ENCODE measurements at regions of chr3 and their contacts with region 1.

Region 1: GRCh38 chr3:119891944-119892721 is 110.2 kb downstream of the NR1I2 start:
- DNase-seq: peak; percentile 59
- H3K4me3 Mint-ChIP-seq: no peak overlapping the region
- H3K27ac Mint-ChIP-seq: no peak overlapping the region
- H3K4me1 Mint-ChIP-seq: peaks cover 17% of the 10 kb centered on the region
- H3K27me3 Mint-ChIP-seq: no peaks in the 10 kb centered on the region

Region 2: GRCh38 chr3:119880966-119881365 is 11.2 kb before region 1 on chr3:
- CTCF ChIA-PET with region 1: interaction called, 13 read pairs
- intact Hi-C with region 1: no loop called
- DNase-seq: no peak
- H3K4me3 Mint-ChIP-seq: no peak overlapping the region
- H3K27ac Mint-ChIP-seq: no peak overlapping the region
- H3K4me1 Mint-ChIP-seq: no peaks in the 10 kb centered on the region
- H3K27me3 Mint-ChIP-seq: no peaks in the 10 kb centered on the region

Region 3: GRCh38 chr3:119937229-119937628 is 45.1 kb after region 1 on chr3:
- CTCF ChIA-PET with region 1: no interaction called
- intact Hi-C with region 1: loop called (anchors 1 kb)
- DNase-seq: peak; percentile 65
- H3K4me3 Mint-ChIP-seq: peak overlapping the region; percentile 31
- H3K27ac Mint-ChIP-seq: peak overlapping the region; percentile 5
- H3K4me1 Mint-ChIP-seq: peaks cover 42% of the 10 kb centered on the region
- H3K27me3 Mint-ChIP-seq: no peaks in the 10 kb centered on the region

Region 4: GRCh38 chr3:120147072-120147871 is 255.1 kb after region 1 on chr3:
- CTCF ChIA-PET with region 1: interaction called, 49 read pairs
- intact Hi-C with region 1: loop called (anchors 1 kb)
- DNase-seq: peak; percentile 61
- H3K4me3 Mint-ChIP-seq: no peak overlapping the region
- H3K27ac Mint-ChIP-seq: no peak overlapping the region
- H3K4me1 Mint-ChIP-seq: peaks cover 25% of the 10 kb centered on the region
- H3K27me3 Mint-ChIP-seq: no peaks in the 10 kb centered on the region

Region 5: GRCh38 chr3:120182724-120183524 is 290.8 kb after region 1 on chr3:
- CTCF ChIA-PET with region 1: interaction called, 8 read pairs
- intact Hi-C with region 1: loop called (anchors 1 kb)
- DNase-seq: peak; percentile 26
- H3K4me3 Mint-ChIP-seq: no peak overlapping the region
- H3K27ac Mint-ChIP-seq: no peak overlapping the region
- H3K4me1 Mint-ChIP-seq: no peaks in the 10 kb centered on the region
- H3K27me3 Mint-ChIP-seq: no peaks in the 10 kb centered on the region

Region 6: DNA sequence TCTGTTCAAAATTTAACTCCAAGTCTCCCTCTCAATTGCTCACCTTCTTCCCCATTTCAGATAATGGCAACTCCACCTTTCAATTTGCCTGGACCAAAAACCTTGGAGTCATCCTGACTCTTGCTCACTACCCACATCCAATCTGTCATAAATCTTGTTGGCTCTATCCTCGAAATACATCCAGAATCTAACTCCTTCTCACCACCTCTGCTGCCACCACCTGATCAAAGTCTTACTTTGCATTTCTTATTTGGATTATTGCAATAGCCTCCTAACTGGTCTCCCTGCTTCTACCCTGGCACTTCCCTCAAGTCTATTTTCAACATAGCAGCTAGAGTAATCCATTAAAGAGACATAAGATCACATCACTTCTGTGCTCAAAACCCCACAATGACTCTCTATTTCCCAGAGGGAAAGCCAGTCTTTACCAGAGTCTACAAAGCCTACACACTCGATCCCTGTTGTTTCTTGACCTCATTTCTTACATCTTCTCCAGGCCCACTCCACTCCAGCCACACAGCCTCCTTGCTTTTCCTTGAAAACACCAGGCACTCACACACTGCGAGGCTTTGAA is 306.3 kb after region 1 on chr3:
- CTCF ChIA-PET with region 1: interaction called, 8 read pairs
- intact Hi-C with region 1: loop called (anchors 1 kb)
- DNase-seq: peak; percentile 19
- H3K4me3 Mint-ChIP-seq: no peak overlapping the region
- H3K27ac Mint-ChIP-seq: no peak overlapping the region
- H3K4me1 Mint-ChIP-seq: no peaks in the 10 kb centered on the region
- H3K27me3 Mint-ChIP-seq: no peaks in the 10 kb centered on the region

Region 7: DNA sequence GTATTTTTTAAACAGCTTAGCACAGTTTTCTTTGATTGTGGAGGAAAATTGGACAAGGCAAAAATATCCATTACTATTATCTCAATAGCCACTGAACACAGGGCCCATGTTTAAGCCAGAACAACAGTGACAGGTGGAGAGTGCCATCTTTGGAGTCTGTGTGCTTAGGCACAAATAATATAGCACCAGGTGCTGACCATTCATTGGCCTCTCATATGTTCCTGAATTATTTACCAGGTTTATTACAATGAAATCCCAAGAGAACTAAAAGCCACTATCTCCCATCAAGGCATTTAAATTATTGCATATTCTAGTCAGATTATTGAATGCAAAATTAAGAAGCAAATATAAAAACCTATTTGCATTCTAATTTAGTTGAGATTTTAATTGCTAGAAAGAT is 353.3 kb after region 1 on chr3:
- CTCF ChIA-PET with region 1: interaction called, 14 read pairs
- intact Hi-C with region 1: loop called (anchors 1 kb)
- DNase-seq: no peak
- H3K4me3 Mint-ChIP-seq: no peak overlapping the region
- H3K27ac Mint-ChIP-seq: no peak overlapping the region
- H3K4me1 Mint-ChIP-seq: no peaks in the 10 kb centered on the region
- H3K27me3 Mint-ChIP-seq: peaks cover 5% of the 10 kb centered on the region

Measured in activated naive CD4-positive, alpha-beta T cell treated with anti-CD3 and anti-CD28 coated beads for 36 hours (primary cell).